Heart right ventricle (tissue), 16 donors: ENCODE measurements at regions of chr3 and their contacts with region 1.

Region 1: DNA sequence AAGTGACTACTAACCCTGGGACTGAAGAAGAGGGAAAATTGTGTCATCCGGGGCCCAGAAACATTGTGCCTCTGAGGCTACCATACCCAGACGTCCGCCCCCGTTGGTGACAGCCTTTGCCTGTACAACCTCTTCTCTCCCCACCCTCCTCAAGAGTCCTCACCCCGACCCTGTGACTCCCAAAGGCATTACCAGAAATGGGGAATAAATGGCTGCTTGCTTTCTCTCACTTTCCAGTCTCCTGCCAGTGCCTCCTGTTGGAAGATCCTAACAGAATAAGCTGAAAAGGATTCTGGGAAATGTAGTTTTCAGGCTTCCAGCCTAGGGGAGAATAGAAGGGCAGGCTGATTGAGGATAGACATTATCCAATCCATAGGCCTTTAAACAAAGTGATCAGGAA is 30.8 kb upstream of the SLC25A36 start:
- DNase-seq: no peak
- ATAC-seq: peak in 4 of 8 donors; percentile 30 to 51 (median 40)
- H3K4me3 ChIP-seq: peak overlapping the region in 4 of 10 donors; percentile 20 to 29 (median 24)
- H3K27ac ChIP-seq: no peak overlapping the region
- H3K4me1 ChIP-seq: no peaks in the 10 kb centered on the region
- H3K27me3 ChIP-seq: no peaks in the 10 kb centered on the region
- CTCF ChIP-seq: peak in 2 of 9 donors; percentile 15 to 17

Region 2: GRCh38 chr3:140467104-140467577 is 443.7 kb before region 1 on chr3:
- intact Hi-C with region 1: no loop called
- DNase-seq: no peak
- ATAC-seq: peak in 7 of 8 donors; percentile 28 to 89 (median 76)
- H3K4me3 ChIP-seq: no peak overlapping the region
- H3K27ac ChIP-seq: no peak overlapping the region
- H3K4me1 ChIP-seq: peaks cover 0 to 11% (median 4%) of the 10 kb centered on the region in 9 donors
- H3K27me3 ChIP-seq: no peaks in the 10 kb centered on the region
- CTCF ChIP-seq: no peak

Region 3: DNA sequence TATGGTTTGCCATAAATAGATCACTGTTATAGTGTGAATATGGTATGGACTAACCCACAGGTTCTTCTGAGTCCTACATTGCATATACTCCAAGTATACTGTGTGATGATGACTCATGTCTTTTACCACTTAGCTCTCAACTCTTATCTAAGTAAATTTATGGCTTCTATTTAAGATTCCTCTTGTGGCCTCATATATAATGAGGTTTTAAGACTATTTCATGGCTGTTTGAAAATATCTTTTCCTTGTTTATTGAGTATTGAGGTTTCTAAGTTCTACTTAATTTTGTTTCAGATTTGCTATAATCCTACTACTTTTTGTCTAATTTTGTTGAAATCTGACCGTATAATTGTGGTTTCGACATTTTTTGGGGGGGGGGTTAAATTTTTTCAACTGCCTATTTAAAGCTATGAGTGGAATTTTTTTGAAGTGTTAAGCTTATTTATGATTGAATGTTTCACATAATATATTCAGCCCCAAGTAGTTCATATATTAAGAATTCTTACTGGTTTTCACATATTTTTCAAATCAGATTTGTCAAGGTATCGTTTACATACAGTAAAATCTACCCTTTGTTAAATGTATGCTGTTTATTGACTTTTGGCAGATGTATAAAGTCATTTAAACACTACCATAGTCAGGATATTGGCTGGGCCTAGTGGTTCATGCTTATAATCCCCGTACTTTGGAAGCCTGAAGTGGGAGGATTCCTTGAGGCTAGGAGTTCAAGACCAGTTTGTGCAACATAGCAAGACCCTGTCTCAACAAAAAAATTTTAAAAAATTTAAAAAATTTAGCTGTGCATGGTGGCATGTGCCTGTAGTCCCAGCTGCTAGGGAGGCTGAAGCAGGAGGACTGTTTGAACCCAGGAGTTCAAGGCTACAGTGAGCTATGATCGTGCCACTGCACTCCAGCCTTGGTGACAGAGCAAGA is 42.4 kb after region 1 on chr3:
- intact Hi-C with region 1: loop called in 1 of 10 experiments (anchors 10 kb)
- DNase-seq: no peak
- ATAC-seq: no peak
- H3K4me3 ChIP-seq: no peak overlapping the region
- H3K27ac ChIP-seq: peak overlapping the region in 2 of 10 donors; percentile 16 to 23
- H3K4me1 ChIP-seq: peaks cover 0 to 93% (median 67%) of the 10 kb centered on the region in 9 donors
- H3K27me3 ChIP-seq: no peaks in the 10 kb centered on the region
- CTCF ChIP-seq: no peak